Heart left ventricle (tissue), 16 donors: ENCODE measurements at regions of chr7 and their contacts with region 1.

Region 1: DNA sequence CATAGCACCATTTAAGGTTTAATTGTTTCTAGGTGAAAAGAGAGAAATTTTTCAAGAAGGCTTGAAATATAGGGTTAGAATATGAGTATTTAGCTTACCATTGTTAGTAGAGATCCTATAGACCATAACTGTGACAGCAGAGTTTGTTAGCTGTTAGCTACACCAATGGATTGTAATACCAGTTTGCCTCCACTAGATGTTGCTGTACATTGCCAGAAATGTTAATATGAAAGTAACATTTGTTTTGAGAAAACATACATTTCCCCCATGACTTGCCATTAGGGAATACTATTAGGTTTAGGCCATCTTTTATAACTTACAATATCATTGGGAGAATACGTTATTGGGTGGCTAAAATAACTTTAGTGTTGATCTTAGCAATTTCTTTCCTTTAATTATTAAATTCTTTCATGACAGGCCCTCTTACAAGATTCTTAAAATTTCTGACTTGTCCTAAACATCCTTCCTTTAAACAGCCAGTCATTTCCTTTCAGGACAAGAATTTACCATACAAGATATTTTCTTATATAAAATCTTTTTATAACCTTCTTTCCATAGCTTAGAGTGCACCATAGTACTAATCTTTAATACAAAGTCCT is 39.5 kb downstream of the ZNF117 start:
- DNase-seq: no peak
- ATAC-seq: peak in 3 of 4 donors; percentile 39 to 72 (median 44)
- H3K4me3 ChIP-seq: no peak overlapping the region
- H3K27ac ChIP-seq: no peak overlapping the region
- H3K4me1 ChIP-seq: peaks cover 0 to 12% (median 8%) of the 10 kb centered on the region in 12 donors
- H3K27me3 ChIP-seq: peaks cover 8 to 26% (median 18%) of the 10 kb centered on the region in 9 donors
- CTCF ChIP-seq: peak; percentile 74 to 92 (median 86)
- POLR2A ChIP-seq: no peak

Region 2: GRCh38 chr7:65216459-65216858 is 265.1 kb after region 1 on chr7:
- intact Hi-C with region 1: loop called in 4 of 10 experiments (anchors 5 to 10 kb)
- DNase-seq: peak in 3 of 5 donors; percentile 34 to 48 (median 37)
- ATAC-seq: no peak
- H3K4me3 ChIP-seq: no peak overlapping the region
- H3K27ac ChIP-seq: no peak overlapping the region
- H3K4me1 ChIP-seq: no peaks in the 10 kb centered on the region
- H3K27me3 ChIP-seq: no peaks in the 10 kb centered on the region
- CTCF ChIP-seq: peak; percentile 39 to 70 (median 56)
- POLR2A ChIP-seq: no peak